ENCODE measurements at regions of chr2 and their contacts with region 1.

Region 1: DNA sequence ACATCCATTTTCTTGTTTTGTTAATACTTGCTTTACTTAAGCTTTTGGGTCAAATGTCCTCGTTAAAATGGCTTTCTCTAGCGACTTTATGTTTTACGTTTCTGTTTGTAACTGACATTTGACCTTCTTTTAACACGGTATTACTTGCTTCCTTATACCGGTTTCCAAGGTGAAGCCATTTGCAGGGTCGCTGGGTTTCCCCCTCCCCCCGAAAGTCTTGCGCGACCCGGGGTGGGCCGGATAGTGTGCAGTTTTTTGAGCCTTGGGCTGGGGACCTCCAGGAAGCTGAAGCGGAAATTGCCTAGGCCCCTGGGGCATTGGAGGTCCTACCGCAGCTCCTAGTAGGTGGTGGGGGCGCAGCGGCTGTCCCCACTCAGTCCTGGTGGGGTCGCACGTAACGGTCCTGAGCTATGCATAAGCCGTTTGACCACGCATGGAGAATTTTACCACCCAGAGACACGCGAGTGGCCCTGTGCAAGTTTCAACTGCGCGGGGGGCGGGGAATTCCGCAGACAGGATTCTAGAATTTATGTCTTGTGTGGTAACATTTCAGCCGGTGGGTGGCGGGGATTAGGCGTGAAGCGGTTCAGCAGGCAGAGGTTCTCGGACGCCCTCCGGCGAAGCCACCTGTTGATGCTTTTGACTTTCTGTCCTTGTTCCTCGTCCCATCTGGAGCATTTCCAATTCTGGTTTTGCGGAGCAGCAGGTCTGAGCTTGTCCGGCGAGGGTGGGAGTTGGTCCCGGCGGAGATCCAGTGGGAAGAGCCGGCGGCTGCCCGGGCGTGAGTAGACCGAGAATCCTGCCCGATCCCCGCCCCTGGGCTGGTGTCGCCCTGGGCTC is 2.4 kb downstream of the CFLAR start:
- DNase-seq: peak; percentile 95
- ATAC-seq: peak; percentile 29
- H3K4me3 Mint-ChIP-seq: peak overlapping the region; percentile 95
- H3K27ac Mint-ChIP-seq: peak overlapping the region; percentile 90
- H3K4me1 Mint-ChIP-seq: peaks cover 50% of the 10 kb centered on the region
- H3K27me3 Mint-ChIP-seq: peaks cover 2% of the 10 kb centered on the region

Region 2: GRCh38 chr2:200864176-200864976 is 254.0 kb before region 1 on chr2 and contains the start of gene CLK1:
- CTCF ChIA-PET with region 1: interaction called, 11 read pairs
- DNase-seq: peak; percentile 98
- ATAC-seq: peak; percentile 84
- H3K4me3 Mint-ChIP-seq: peak within 1 kb of the TSS; percentile 84
- H3K27ac Mint-ChIP-seq: peak within 1 kb of the TSS; percentile 99
- H3K4me1 Mint-ChIP-seq: peaks cover 47% of the 10 kb centered on the region
- H3K27me3 Mint-ChIP-seq: no peaks in the 10 kb centered on the region
- total RNA-seq, gene CLK1: 129 to 130 TPM

Region 3: GRCh38 chr2:201071479-201072200 is 46.7 kb before region 1 on chr2 and contains the starts of genes HYCC2 and NDUFB3:
- CTCF ChIA-PET with region 1: interaction called, 49 read pairs
- DNase-seq: peak; percentile 97
- ATAC-seq: peak; percentile 98
- H3K4me3 Mint-ChIP-seq: peak within 1 kb of the TSS; percentile 91
- H3K27ac Mint-ChIP-seq: peak within 1 kb of the TSS; percentile 88
- H3K4me1 Mint-ChIP-seq: peaks cover 55% of the 10 kb centered on the region
- H3K27me3 Mint-ChIP-seq: no peaks in the 10 kb centered on the region
- total RNA-seq, gene HYCC2: 33.4 to 37.2 TPM
- total RNA-seq, gene NDUFB3: 116 to 141 TPM

Region 4: DNA sequence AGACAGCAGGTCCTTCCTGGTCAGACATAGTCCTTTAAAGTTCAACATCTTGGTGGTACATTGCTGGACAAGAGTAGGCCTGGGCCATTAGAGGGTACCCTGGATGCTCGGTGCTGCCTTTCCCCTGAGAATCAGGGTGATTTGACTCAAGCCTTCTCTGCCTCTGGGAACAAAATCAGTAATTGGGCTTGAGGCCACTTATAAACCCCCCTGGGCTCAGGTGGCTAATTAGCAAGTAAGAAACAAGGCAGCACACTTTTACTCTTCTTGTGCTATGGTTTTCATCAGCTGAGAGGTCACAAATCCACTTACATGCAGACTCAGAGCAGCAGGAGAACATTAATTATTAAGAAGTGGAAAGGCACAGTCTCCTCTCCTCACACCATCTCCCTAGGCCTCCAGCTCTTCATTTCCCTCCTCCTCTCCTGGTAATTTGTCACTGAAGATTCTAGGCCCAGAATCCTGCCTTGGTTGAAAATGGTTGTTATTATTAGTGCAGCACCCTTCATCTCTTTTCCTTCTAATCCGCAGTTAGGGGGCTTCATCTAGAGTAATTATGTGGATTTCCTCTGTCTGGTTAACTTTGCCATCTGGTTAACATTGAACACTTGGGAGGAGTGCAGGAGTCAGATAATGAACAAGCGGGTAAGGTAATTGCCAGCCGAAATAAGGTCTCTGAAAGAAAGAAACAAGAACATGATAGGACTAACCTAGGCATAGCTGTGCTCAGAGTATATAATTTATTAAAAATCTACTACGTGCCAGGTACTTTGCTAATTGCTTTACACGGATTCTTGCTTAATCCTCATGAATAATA is 34.9 kb after region 1 on chr2:
- CTCF ChIA-PET with region 1: interaction called, 49 read pairs
- DNase-seq: no peak
- ATAC-seq: no peak
- H3K4me3 Mint-ChIP-seq: no peak overlapping the region
- H3K27ac Mint-ChIP-seq: peak overlapping the region; percentile 76
- H3K4me1 Mint-ChIP-seq: peaks cover 43% of the 10 kb centered on the region
- H3K27me3 Mint-ChIP-seq: no peaks in the 10 kb centered on the region

Region 5: GRCh38 chr2:201257956-201258665 is 139.8 kb after region 1 on chr2:
- CTCF ChIA-PET with region 1: interaction called, 12 read pairs
- DNase-seq: peak; percentile 98
- ATAC-seq: peak; percentile 65
- H3K4me3 Mint-ChIP-seq: peak overlapping the region; percentile 83
- H3K27ac Mint-ChIP-seq: peak overlapping the region; percentile 98
- H3K4me1 Mint-ChIP-seq: peaks cover 66% of the 10 kb centered on the region
- H3K27me3 Mint-ChIP-seq: no peaks in the 10 kb centered on the region